Panc1 (cell line): ENCODE measurements at regions of chr13 and their contacts with region 1.

Region 1: GRCh38 chr13:22017226-22017625 is 346.4 kb downstream of the FGF9 start:
- DNase-seq: no peak
- ATAC-seq: no peak
- H3K4me3 ChIP-seq: no peak overlapping the region
- H3K27ac ChIP-seq: no peak overlapping the region
- H3K4me1 ChIP-seq: no peaks in the 10 kb centered on the region
- H3K27me3 ChIP-seq: no peaks in the 10 kb centered on the region
- CTCF ChIP-seq: no peak

Region 2: GRCh38 chr13:22049384-22049783 is 32.2 kb after region 1 on chr13:
- CTCF ChIA-PET with region 1: no interaction called
- POLR2A ChIA-PET with region 1: interaction called, 16 read pairs
- in situ Hi-C with region 1: no loop called
- intact Hi-C with region 1: no loop called
- DNase-seq: no peak
- ATAC-seq: no peak
- H3K4me3 ChIP-seq: no peak overlapping the region
- H3K27ac ChIP-seq: no peak overlapping the region
- H3K4me1 ChIP-seq: no peaks in the 10 kb centered on the region
- H3K27me3 ChIP-seq: no peaks in the 10 kb centered on the region
- CTCF ChIP-seq: no peak